GM12878 (cell line): ENCODE measurements at regions of chr5 and their contacts with region 1.

Region 1: DNA sequence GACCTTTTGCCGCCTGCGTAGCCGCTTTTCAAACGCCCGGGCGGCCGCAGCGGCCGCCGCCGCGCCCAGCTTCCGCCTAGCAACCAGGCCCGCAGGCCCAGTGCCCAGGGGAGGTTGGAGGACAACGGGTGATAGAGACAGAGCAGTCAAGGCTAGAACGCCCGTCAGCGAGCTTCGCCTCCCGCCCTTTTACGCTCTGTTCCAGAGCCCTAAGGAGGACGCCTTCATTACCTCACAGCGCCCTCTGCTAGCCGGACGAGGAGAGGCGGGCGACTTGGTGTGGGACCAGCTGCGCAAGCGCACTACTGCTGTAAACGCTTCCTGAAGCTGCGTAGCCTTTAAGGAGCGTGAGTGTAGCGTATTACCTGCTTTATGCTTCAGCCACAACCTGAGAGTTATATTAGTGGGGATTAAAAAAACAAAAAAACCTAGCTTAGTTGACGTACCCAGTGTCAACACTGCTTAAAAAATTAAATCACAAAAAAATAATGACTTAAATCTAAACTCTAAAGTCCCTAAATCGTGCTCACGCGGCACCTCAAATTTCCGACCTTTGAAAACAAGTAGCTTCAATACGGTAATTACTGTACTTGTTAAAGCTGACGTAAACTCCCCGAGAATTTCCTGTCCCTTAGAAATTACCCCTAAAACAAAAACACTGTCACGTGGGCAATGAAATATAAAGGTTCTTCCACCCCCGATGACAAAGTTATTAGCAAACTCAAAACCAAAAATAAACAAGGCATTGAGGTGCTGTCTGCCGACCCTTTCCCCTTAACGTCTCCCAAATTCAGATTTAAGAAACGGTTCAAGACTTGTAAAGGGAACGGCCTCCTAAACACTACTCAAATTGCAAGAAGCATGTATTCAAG is at the start of gene CEP120:
- DNase-seq: peak; percentile 98
- ATAC-seq: peak; percentile 97
- H3K4me3 ChIP-seq: peak within 1 kb of the TSS; percentile 83
- H3K27ac ChIP-seq: peak within 1 kb of the TSS; percentile 81
- H3K4me1 ChIP-seq: no peaks in the 10 kb centered on the region; the same call in 1 of the 2 replicates
- H3K27me3 ChIP-seq: no peaks in the 10 kb centered on the region
- CTCF ChIP-seq: peak; percentile 81 to 99 (median 95); a peak in 5 of 6 replicates
- EP300 ChIP-seq: peak in 1 of 2 experiments; percentile 44; a peak in 1 of 4 replicates
- POLR2A ChIP-seq: peak; percentile 91
- RAD21 ChIP-seq: peak; percentile 65
- polyA plus RNA-seq, gene CEP120: 4.1 to 4.3 TPM

Region 2: DNA sequence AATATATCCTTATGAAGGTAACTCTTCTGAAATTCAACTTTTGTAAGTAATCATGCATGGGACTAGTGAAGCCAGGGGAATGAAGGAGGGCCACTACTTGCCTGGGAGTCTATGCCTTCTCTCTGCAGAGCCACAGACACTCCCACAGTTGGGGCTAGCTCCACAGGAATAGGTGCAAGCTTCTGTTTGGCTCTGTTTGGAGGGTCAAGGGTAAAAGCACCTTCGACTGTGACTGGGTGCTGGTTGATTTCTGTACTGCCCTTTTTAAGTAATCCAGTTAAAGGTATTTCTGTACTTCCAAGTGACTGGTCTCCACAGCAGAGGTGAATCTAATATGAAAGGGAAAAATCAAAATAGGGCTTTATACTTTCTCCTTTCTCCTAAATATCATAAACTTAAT is 32.5 kb before region 1 on chr5:
- CTCF ChIA-PET with region 1: interaction called, 16 read pairs
- POLR2A ChIA-PET with region 1: no interaction called
- RAD21 ChIA-PET with region 1: interaction called, 5 read pairs
- SMC1A ChIA-PET with region 1: interaction called, 11 read pairs
- in situ Hi-C with region 1: no loop called
- intact Hi-C with region 1: no loop called
- DNase-seq: no peak
- ATAC-seq: no peak
- H3K4me3 ChIP-seq: no peak overlapping the region
- H3K27ac ChIP-seq: no peak overlapping the region
- H3K4me1 ChIP-seq: no peaks in the 10 kb centered on the region
- H3K27me3 ChIP-seq: no peaks in the 10 kb centered on the region
- CTCF ChIP-seq: no peak
- EP300 ChIP-seq: no peak
- POLR2A ChIP-seq: no peak
- RAD21 ChIP-seq: no peak

Region 3: GRCh38 chr5:123433596-123433995 is 10.1 kb after region 1 on chr5:
- CTCF ChIA-PET with region 1: interaction called, 14 read pairs
- POLR2A ChIA-PET with region 1: interaction called, 7 read pairs
- RAD21 ChIA-PET with region 1: interaction called, 10 read pairs
- SMC1A ChIA-PET with region 1: interaction called, 5 read pairs
- in situ Hi-C with region 1: no loop called
- intact Hi-C with region 1: no loop called
- DNase-seq: no peak
- ATAC-seq: no peak
- H3K4me3 ChIP-seq: no peak overlapping the region
- H3K27ac ChIP-seq: no peak overlapping the region
- H3K4me1 ChIP-seq: peaks cover 6% of the 10 kb centered on the region
- H3K27me3 ChIP-seq: no peaks in the 10 kb centered on the region
- CTCF ChIP-seq: no peak
- EP300 ChIP-seq: no peak
- POLR2A ChIP-seq: no peak
- RAD21 ChIP-seq: no peak

Region 4: DNA sequence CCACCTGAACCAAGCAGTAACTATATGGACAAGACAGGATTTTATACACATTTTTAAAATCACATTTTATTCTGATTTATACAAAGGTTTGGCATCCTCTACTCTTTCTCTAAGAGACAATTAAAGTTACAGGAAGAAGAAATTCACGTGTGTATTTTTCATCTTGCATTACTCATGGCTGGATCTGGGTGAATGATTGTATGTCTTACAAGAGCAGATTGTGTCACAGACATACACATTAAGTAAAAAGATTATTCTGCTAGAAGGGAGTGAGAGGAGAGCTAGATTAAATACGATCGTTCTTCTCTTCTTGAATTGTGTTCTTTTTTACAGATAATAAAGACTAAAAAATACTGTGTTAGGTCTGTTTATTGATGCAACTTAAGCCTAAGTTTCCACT is 20.5 kb after region 1 on chr5:
- CTCF ChIA-PET with region 1: interaction called, 12 read pairs
- POLR2A ChIA-PET with region 1: interaction called, 15 read pairs
- RAD21 ChIA-PET with region 1: interaction called, 10 read pairs
- SMC1A ChIA-PET with region 1: interaction called, 20 read pairs
- in situ Hi-C with region 1: no loop called
- intact Hi-C with region 1: loop called (anchors 1 kb)
- DNase-seq: no peak
- ATAC-seq: no peak
- H3K4me3 ChIP-seq: no peak overlapping the region
- H3K27ac ChIP-seq: no peak overlapping the region
- H3K4me1 ChIP-seq: peaks cover 21% of the 10 kb centered on the region
- H3K27me3 ChIP-seq: no peaks in the 10 kb centered on the region
- CTCF ChIP-seq: no peak
- EP300 ChIP-seq: no peak
- POLR2A ChIP-seq: no peak
- RAD21 ChIP-seq: no peak

Region 5: GRCh38 chr5:123511648-123512605 is 88.4 kb after region 1 on chr5 and contains the start of gene CSNK1G3:
- CTCF ChIA-PET with region 1: interaction called, 7 read pairs
- POLR2A ChIA-PET with region 1: interaction called, 12 read pairs
- RAD21 ChIA-PET with region 1: interaction called, 30 read pairs
- SMC1A ChIA-PET with region 1: interaction called, 27 read pairs
- in situ Hi-C with region 1: no loop called
- intact Hi-C with region 1: loop called (anchors 1 kb)
- DNase-seq: peak; percentile 82
- ATAC-seq: peak; percentile 95
- H3K4me3 ChIP-seq: peak within 1 kb of the TSS; percentile 82
- H3K27ac ChIP-seq: peak within 1 kb of the TSS; percentile 83
- H3K4me1 ChIP-seq: peaks cover 9% of the 10 kb centered on the region
- H3K27me3 ChIP-seq: no peaks in the 10 kb centered on the region
- CTCF ChIP-seq: peak in 1 of 3 experiments; percentile 19; a peak in 2 of 6 replicates
- EP300 ChIP-seq: no peak
- POLR2A ChIP-seq: peak; percentile 96
- RAD21 ChIP-seq: no peak
- polyA plus RNA-seq, gene CSNK1G3: 7.4 to 7.8 TPM

Region 6: GRCh38 chr5:123527190-123527589 is 103.7 kb after region 1 on chr5:
- CTCF ChIA-PET with region 1: interaction called, 6 read pairs
- POLR2A ChIA-PET with region 1: interaction called, 6 read pairs
- RAD21 ChIA-PET with region 1: interaction called, 4 read pairs
- SMC1A ChIA-PET with region 1: interaction called, 11 read pairs
- in situ Hi-C with region 1: no loop called
- intact Hi-C with region 1: no loop called
- DNase-seq: no peak
- ATAC-seq: peak; percentile 74
- H3K4me3 ChIP-seq: no peak overlapping the region
- H3K27ac ChIP-seq: no peak overlapping the region
- H3K4me1 ChIP-seq: peaks cover 13% of the 10 kb centered on the region
- H3K27me3 ChIP-seq: no peaks in the 10 kb centered on the region
- CTCF ChIP-seq: no peak
- EP300 ChIP-seq: no peak
- POLR2A ChIP-seq: no peak
- RAD21 ChIP-seq: no peak

Region 7: GRCh38 chr5:123605822-123606221 is 182.3 kb after region 1 on chr5:
- CTCF ChIA-PET with region 1: interaction called, 32 read pairs
- POLR2A ChIA-PET with region 1: interaction called, 4 read pairs
- RAD21 ChIA-PET with region 1: interaction called, 27 read pairs
- SMC1A ChIA-PET with region 1: interaction called, 47 read pairs
- in situ Hi-C with region 1: loop called (anchors 25 kb)
- intact Hi-C with region 1: loop called (anchors 1 kb)
- DNase-seq: no peak
- ATAC-seq: peak; percentile 74
- H3K4me3 ChIP-seq: no peak overlapping the region
- H3K27ac ChIP-seq: no peak overlapping the region
- H3K4me1 ChIP-seq: peaks cover 8% of the 10 kb centered on the region; the same call in 1 of the 2 replicates
- H3K27me3 ChIP-seq: no peaks in the 10 kb centered on the region
- CTCF ChIP-seq: no peak
- EP300 ChIP-seq: no peak
- POLR2A ChIP-seq: no peak
- RAD21 ChIP-seq: no peak

Region 8: DNA sequence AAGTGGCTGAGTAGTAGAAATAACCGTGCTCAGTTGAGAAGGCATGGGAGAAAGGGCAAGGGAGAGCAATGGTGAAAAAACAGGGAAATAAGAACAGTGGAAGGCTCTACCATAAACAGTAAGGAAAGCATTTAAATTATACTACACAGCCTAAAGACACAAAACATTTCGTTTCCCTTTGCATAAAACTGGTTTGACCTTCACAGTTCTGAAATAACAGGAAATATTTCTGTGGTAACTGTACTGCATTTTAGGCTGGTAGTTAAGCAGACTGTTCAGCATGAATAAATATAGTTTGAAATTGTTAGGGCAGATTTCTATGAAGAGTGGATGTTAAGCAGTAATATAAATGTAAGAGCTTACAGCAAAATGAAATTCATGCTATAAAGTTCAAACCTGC is 236.0 kb after region 1 on chr5:
- CTCF ChIA-PET with region 1: no interaction called
- POLR2A ChIA-PET with region 1: no interaction called
- RAD21 ChIA-PET with region 1: no interaction called
- SMC1A ChIA-PET with region 1: no interaction called
- in situ Hi-C with region 1: no loop called
- intact Hi-C with region 1: no loop called
- DNase-seq: no peak
- ATAC-seq: no peak
- H3K4me3 ChIP-seq: no peak overlapping the region
- H3K27ac ChIP-seq: no peak overlapping the region
- H3K4me1 ChIP-seq: no peaks in the 10 kb centered on the region
- H3K27me3 ChIP-seq: no peaks in the 10 kb centered on the region; a peak in 2 of 4 replicates
- CTCF ChIP-seq: no peak
- EP300 ChIP-seq: no peak
- POLR2A ChIP-seq: no peak
- RAD21 ChIP-seq: no peak

Region 9: GRCh38 chr5:123735384-123735783 is 311.9 kb after region 1 on chr5:
- CTCF ChIA-PET with region 1: no interaction called
- POLR2A ChIA-PET with region 1: no interaction called
- RAD21 ChIA-PET with region 1: no interaction called
- SMC1A ChIA-PET with region 1: no interaction called
- in situ Hi-C with region 1: no loop called
- intact Hi-C with region 1: no loop called
- DNase-seq: no peak
- ATAC-seq: no peak
- H3K4me3 ChIP-seq: no peak overlapping the region
- H3K27ac ChIP-seq: no peak overlapping the region
- H3K4me1 ChIP-seq: no peaks in the 10 kb centered on the region
- H3K27me3 ChIP-seq: no peaks in the 10 kb centered on the region
- CTCF ChIP-seq: no peak
- EP300 ChIP-seq: no peak
- POLR2A ChIP-seq: no peak
- RAD21 ChIP-seq: no peak